ENCODE measurements at regions of chr1 and their contacts with region 1.

Region 1: DNA sequence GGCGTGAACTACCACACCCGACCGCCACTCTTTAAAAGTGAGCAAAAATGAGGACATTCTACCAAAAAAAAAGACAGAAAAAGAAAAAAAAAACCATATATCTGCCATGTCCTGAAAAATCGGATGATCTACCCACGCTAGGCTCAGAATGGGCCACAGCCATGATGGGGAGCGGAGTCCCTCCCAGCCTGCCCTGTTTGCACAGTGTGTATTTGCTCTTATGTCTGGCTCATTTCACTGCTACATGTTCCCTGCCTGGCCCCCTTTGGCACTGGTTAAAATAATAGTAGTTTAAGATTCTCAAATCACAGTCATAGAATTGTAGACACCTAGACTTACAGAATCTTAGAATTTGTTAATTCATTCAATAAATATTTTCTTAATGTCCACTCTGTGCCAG is 121.9 kb downstream of the PTPRU start:
- DNase-seq: no peak
- ATAC-seq: no peak
- H3K4me3 ChIP-seq: no peak overlapping the region
- H3K27ac ChIP-seq: no peak overlapping the region
- H3K4me1 ChIP-seq: no peaks in the 10 kb centered on the region
- H3K27me3 ChIP-seq: peaks cover 18% of the 10 kb centered on the region
- CTCF ChIP-seq: no peak
- POLR2A ChIP-seq: no peak
- RAD21 ChIP-seq: no peak

Region 2: DNA sequence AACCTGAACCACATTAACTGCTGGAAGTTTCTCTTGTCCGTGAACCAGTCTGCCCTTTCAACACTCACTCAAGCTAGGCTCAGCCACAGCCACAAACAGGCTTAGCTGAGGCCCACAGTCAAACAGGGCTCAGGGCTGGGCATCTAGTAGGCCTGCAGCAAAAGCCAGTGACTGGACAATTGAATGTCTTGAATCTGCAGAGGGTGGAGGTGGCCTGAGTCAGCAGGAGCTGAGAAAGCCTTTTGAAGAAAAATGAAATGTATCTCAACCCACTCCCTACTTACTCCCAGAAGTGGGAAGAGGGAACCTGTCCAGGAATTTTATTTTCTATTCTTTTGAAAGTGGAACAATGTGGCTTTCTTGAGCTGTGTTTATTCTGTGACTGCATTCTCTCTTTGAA is 26.5 kb before region 1 on chr1:
- CTCF ChIA-PET with region 1: no interaction called
- POLR2A ChIA-PET with region 1: no interaction called
- dilution Hi-C with region 1: no loop called
- in situ Hi-C with region 1: no loop called
- intact Hi-C with region 1: loop called (anchors 1 kb)
- DNase-seq: no peak
- ATAC-seq: no peak
- H3K4me3 ChIP-seq: no peak overlapping the region
- H3K27ac ChIP-seq: no peak overlapping the region
- H3K4me1 ChIP-seq: no peaks in the 10 kb centered on the region
- H3K27me3 ChIP-seq: peaks cover 11% of the 10 kb centered on the region
- CTCF ChIP-seq: no peak
- POLR2A ChIP-seq: no peak
- RAD21 ChIP-seq: no peak

Region 3: GRCh38 chr1:29396438-29397255 is 38.5 kb after region 1 on chr1:
- CTCF ChIA-PET with region 1: no interaction called
- POLR2A ChIA-PET with region 1: no interaction called
- dilution Hi-C with region 1: no loop called
- in situ Hi-C with region 1: no loop called
- intact Hi-C with region 1: no loop called
- DNase-seq: peak; percentile 8
- ATAC-seq: no peak
- H3K4me3 ChIP-seq: no peak overlapping the region
- H3K27ac ChIP-seq: no peak overlapping the region
- H3K4me1 ChIP-seq: no peaks in the 10 kb centered on the region
- H3K27me3 ChIP-seq: no peaks in the 10 kb centered on the region; the same call in none of the 2 replicates
- CTCF ChIP-seq: 0 out of 2 replicates have a peak, but pooled peaks have one; percentile 17
- POLR2A ChIP-seq: no peak
- RAD21 ChIP-seq: no peak